Dorsolateral prefrontal cortex (tissue), 120 donors: ENCODE measurements at regions of chr16 and their contacts with region 1.

Region 1: GRCh38 chr16:75622761-75623605 is at the start of gene ADAT1:
- DNase-seq: peak; percentile 94 to 99 (median 98)
- H3K4me3 ChIP-seq: peak within 1 kb of the TSS; percentile 60 to 98 (median 87)
- H3K27ac ChIP-seq: peak within 1 kb of the TSS; percentile 20 to 99 (median 90)
- H3K27me3 ChIP-seq: no peaks in the 10 kb centered on the region
- CTCF ChIP-seq: peak in 39 of 56 donors; percentile 7 to 65 (median 34)
- total RNA-seq, gene ADAT1: 45.1 to 91.6 (median 59.6) TPM

Region 2: GRCh38 chr16:75464130-75464918 is 158.7 kb before region 1 on chr16 and contains the start of gene TMEM170A:
- intact Hi-C with region 1: loop called in 1 of 2 experiments (anchors 2 kb)
- DNase-seq: peak; percentile 97 to 99 (median 98)
- H3K4me3 ChIP-seq: peak within 1 kb of the TSS; percentile 68 to 99 (median 95)
- H3K27ac ChIP-seq: peak within 1 kb of the TSS; percentile 86 to 99 (median 96)
- H3K27me3 ChIP-seq: no peaks in the 10 kb centered on the region
- CTCF ChIP-seq: peak in 55 of 56 donors; percentile 99 to 100 (median 100)
- total RNA-seq, gene TMEM170A: 20.2 to 47.4 (median 29.5) TPM

Region 3: DNA sequence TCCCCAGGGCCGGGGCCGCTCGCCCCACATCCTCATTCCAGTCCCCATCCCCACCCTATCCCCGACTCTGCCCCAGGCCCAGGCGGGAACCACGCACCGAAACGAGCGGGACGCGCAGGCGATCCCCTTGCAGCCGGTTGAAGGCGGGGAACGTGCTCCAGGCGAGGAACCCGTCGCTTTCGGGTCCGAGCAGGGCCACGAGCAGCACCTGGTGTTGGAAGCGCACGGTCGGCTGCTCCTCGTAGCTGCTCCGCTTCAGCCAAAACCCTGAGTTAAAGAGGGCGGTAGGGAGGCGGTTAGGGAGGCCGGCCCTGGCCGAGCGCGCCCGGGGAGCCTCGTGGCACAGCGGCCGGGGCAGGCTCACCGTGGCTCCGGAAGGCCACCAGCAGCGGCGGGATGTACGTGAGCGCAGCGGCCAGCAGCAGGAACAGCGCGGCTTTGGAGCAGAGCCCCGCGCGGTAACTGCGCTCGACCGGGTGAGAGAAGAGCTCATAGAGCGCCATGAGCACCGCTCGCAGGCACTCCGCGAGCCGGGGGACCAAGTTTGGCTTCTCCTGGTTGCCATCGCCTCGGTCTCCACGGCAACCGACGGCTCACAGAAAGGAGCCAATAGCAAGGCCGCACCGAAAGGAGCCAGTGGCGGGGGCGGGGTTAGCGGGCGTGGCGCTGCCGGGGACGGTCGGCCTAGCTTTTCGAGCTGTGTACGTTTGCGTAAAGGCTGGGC is 67.1 kb before region 1 on chr16 and contains the start of gene TMEM231:
- intact Hi-C with region 1: loop called in 1 of 2 experiments (anchors 1 kb)
- DNase-seq: peak; percentile 95 to 99 (median 98)
- H3K4me3 ChIP-seq: peak within 1 kb of the TSS; percentile 65 to 99 (median 87)
- H3K27ac ChIP-seq: peak within 1 kb of the TSS; percentile 35 to 93 (median 85)
- H3K27me3 ChIP-seq: no peaks in the 10 kb centered on the region
- CTCF ChIP-seq: peak in 31 of 56 donors; percentile 7 to 49 (median 28)
- total RNA-seq, gene TMEM231: 16.2 to 36.0 (median 24.0) TPM

Region 4: DNA sequence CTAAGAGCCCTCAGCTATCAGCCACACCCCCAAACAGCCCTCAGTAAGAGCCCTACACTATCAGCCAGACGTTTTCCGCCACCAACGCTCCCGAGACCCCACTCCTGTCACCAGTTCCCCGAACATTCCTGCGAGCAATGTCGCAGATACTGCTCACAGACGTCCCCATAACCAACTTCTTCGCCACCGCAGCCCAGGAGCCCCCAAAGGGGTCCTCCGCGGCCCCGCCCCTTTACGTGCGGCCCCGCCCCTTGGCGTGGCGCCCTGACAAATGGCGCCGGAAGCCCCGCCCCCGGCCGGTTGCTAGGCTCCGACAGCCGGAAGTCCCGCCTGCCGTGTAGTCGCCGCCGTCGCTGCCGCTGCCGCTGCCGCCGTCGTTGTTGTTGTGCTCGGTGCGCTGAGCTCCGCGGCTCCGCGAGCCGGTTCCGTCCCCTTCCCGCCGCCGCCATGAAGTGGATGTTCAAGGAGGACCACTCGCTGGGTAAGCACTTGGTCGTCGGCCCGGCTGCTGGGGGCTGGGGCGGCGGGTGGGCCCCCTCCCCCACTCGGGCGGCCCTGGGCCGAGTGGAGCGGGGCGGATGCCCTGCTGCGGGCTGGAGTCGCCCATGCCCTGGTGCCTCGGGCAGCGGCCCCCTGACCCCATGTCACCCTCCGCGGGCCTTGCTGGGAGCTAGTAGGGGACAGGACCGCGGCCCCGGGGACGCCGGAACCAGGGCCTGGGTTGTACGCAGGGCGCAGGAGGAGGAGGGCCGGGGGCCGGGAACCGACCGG is 56.8 kb before region 1 on chr16 and contains the start of gene GABARAPL2:
- intact Hi-C with region 1: loop called in 1 of 2 experiments (anchors 1 kb)
- DNase-seq: peak; percentile 75 to 94 (median 84)
- H3K4me3 ChIP-seq: peak within 1 kb of the TSS; percentile 58 to 100 (median 97)
- H3K27ac ChIP-seq: peak within 1 kb of the TSS in 52 of 59 donors; percentile 19 to 91 (median 78)
- H3K27me3 ChIP-seq: no peaks in the 10 kb centered on the region
- CTCF ChIP-seq: peak in 10 of 56 donors; percentile 5 to 27 (median 19)
- total RNA-seq, gene GABARAPL2: 171 to 307 (median 259) TPM

Region 5: GRCh38 chr16:75647492-75648264 is 24.7 kb after region 1 on chr16 and contains the starts of genes KARS1 and TERF2IP:
- intact Hi-C with region 1: loop called (anchors 1 to 2 kb)
- DNase-seq: peak; percentile 90 to 97 (median 94)
- H3K4me3 ChIP-seq: peak within 1 kb of the TSS; percentile 76 to 100 (median 97)
- H3K27ac ChIP-seq: peak within 1 kb of the TSS; percentile 92 to 100 (median 99)
- H3K27me3 ChIP-seq: no peaks in the 10 kb centered on the region
- CTCF ChIP-seq: peak in 23 of 56 donors; percentile 7 to 48 (median 27)
- total RNA-seq, gene KARS1: 39.4 to 84.1 (median 60.8) TPM
- total RNA-seq, gene TERF2IP: 104 to 284 (median 207) TPM

Region 6: DNA sequence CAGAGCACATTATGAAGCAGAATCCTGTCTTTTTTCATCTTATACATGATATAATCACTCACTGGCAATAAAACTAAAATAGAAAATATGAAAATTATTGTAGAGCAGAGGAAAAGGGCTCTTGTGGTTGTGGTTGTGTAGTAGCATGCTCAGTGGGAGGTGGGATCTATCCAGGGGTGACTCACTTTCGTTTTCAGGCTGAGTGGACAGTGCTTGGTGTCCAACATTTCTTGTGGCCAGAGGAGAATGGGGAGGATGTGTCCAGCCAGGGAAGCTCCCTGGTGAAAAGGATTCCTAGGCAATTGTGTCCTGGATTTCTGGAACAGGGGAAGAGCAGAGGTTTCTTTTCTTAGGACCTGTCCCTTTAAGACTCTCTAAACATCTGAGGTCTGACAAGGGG is 135.2 kb after region 1 on chr16:
- intact Hi-C with region 1: loop called in 1 of 2 experiments (anchors 2 kb)
- DNase-seq: no peak
- H3K4me3 ChIP-seq: no peak overlapping the region
- H3K27ac ChIP-seq: no peak overlapping the region
- H3K27me3 ChIP-seq: no peaks in the 10 kb centered on the region
- CTCF ChIP-seq: no peak

Region 7: DNA sequence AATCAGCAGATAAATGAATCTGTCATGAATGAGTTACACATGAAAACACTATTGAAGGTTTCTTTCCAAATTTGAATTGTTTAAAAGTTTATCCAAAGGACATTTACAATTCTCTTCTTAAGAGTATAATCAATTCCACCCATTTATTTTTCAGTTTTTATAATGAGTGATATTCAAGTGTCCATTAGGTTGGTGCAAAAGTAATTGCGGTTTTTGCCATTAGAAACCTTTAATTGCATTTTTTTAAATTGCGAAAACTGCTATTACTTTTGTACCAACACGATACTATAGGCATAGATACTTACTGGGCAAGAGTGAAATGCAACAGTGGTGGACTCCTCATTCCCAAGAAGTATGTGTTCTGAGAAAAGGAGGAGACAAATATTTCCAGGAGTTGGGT is 1145.3 kb after region 1 on chr16:
- intact Hi-C with region 1: no loop called
- DNase-seq: no peak
- H3K4me3 ChIP-seq: no peak overlapping the region
- H3K27ac ChIP-seq: no peak overlapping the region
- H3K27me3 ChIP-seq: no peaks in the 10 kb centered on the region
- CTCF ChIP-seq: no peak